G401 (cell line): ENCODE measurements at regions of chr17 and their contacts with region 1.

Region 1: GRCh38 chr17:57761887-57762286 is 16.8 kb upstream of the CCDC182 start:
- DNase-seq: no peak

Region 2: DNA sequence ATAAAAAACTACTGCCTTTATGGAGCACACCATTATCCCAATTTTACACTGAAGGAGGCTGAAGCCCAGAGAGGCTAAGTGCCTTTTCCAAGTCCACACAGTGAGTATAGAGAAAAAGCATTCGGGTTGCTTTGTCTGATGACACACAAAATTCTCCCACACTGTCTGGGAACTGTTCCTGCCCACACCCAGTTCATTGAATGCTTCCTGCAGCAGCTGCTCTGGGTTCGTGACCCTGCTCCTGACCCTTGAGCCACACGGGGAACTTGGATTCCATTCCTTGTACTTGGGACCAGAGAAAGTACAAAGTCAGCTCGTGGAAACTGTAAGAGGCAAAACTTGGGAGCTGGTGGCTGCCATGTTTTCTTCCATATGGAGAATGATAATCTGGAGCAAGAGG is 619.0 kb before region 1 on chr17:
- in situ Hi-C with region 1: loop called (anchors 10 kb)
- DNase-seq: no peak

Region 3: DNA sequence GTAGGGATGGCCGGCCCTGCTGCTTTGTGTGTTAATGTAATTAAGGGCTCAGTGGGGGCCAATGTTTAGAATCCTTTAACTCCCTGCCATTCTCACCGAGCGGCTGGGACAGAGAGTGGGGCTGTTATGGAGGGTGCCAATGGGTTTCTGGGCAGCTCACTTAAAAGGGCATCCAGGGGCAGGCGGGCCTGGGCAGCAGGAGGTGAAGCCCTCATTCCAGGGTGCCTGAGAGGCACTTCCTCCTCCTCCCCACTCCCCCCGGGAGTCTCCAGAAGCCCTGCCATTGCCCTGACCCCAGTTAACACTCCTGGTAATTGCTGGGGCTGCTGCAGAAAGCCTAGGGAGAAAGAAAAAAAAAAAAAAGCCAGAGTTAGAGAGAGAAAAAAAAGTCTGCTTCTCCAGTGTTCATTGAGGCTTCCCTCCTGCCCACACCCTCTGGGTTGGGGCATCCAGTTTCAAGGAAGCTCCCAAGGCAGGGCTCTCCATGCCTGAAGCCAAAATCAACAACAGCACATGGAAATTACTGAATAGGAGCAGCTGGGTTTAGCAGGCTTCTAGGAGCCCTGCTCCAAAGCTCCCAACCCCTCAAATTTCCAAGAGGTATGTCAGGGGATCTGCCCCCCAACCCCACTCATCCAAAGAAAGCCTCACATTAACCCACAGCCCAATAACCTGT is 165.3 kb after region 1 on chr17:
- in situ Hi-C with region 1: no loop called
- DNase-seq: no peak

Region 4: DNA sequence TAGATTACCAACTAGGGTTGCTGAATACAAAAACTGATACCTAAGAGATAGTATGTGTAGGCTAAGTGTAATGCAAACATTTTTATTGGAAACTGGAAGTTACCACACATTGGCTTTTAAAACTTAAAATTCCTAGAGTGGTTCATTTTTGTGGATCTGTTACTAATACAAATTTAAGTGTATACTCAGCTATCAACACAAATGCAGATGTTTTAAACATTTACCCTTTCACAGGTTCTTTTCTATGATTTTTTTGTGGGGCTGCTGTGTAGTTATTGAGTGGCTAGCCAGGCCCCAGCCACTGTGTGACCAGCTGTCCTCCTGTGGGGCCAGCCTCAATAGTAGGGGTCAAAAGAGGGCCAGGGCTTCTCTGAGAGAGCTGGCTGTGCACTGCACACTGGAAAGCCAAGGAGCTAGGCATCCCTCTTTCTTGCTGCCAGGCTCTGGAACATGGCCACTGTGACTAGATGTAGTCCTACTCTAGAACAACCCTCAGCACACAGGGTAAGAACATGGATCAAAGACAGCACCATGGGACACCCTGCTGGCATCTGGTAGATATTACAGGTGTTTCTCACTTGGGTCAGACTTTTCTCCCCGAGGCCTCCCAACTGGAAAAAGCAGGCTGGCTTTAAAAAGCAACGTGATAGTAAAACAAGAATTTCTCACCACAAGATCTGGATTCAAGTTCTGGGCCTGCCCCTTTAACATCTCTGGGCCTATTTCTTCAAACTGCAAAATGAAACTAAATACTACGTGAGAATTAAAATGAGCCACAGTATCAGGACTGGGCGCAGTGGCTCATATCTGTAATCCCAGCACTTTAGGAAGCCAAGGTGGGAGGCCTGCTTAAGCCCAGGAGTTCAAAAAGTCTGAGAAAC is 233.4 kb after region 1 on chr17:
- in situ Hi-C with region 1: no loop called
- DNase-seq: peak; percentile 66

Region 5: DNA sequence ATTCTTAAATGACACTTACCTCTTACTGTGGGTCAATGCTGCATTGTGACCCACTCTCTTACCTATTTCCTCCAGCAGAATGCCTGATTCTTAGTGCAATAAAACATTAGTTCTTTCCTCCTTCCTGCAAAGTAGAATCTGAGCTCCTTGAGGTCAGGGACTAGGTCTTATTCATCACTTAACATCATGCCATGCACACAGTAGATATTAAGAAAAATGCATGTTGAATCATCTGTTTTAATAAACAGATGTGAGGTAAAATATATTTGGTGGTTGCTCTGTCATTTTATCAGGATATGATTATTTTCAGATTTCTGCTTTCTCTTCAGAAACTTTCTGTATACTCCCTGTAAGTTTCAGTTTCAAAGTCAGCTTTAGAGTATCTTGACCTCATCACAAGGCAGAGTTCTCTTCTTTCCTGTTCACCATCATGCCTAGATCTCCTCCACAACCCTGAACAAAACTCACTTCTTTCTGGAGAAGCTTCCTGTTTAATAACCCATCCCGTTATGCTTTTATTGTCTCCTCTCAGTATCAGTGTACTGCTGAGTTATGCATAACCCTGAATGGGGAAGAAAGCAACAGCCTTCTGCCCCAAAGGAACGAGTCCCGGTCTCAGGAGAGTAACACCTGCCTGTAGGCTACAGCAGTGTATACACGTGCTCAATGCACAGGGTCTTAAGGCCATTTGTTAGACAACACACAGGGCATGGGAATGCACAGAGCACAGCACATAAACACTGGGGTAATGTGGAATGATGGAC is 620.4 kb after region 1 on chr17:
- in situ Hi-C with region 1: loop called (anchors 10 kb)
- DNase-seq: no peak